ENCODE measurements at regions of chr13 and their contacts with region 1.

Region 1: DNA sequence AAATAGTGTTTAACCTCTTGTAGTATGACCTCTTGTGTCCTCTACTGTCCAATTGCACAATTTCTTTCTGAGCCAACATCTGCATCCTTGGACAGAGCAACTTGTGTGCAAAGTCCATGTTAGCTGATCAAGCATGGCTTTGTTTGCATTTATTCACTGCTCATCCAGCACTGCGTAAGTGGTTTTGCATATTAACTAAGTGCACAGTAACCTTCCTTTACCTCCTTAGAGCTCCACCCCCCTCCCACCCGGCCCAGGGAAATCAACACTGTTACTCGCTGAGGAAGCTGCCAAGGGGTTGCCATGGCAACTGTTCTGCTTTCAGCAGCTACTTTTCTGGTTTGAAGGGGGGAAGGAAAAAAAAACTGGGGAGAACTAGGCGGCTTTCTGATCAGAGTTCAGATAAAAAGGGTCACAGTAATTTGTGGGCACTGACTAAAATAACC is 153.5 kb upstream of the KLF12 start:
- DNase-seq: peak; percentile 87
- ATAC-seq: peak; percentile 73
- H3K4me3 Mint-ChIP-seq: peak overlapping the region; percentile 60
- H3K27ac Mint-ChIP-seq: peak overlapping the region; percentile 78
- H3K4me1 Mint-ChIP-seq: peaks cover 43% of the 10 kb centered on the region
- H3K27me3 Mint-ChIP-seq: no peaks in the 10 kb centered on the region

Region 2: DNA sequence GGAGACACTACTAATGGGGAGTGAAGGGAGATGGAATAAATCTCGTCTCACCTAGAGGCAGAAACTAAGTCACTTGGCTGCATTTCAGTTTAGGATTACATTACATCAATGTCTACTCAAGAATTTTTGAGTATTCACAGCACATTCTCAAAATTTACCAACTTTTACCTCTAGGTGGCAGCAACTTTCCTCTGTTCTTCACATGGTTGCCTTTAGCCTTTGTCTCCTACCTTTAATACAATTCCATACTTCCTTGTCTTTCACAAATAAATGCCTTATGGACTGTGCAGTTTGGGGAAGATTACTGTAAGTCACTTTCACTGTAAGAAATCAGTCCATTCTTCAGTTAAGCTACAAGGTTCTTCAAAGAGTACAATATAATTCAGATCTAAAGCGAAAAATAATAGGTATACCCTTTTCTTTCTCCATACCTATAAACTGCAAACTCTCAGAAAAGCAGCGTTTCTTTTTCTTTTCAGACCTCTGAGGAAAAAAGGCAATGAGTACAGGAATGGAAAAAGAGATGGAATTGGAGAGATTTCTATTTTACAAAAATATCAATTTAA is 532.9 kb before region 1 on chr13:
- CTCF ChIA-PET with region 1: interaction called, 11 read pairs
- POLR2A ChIA-PET with region 1: no interaction called
- DNase-seq: peak; percentile 47
- ATAC-seq: peak; percentile 63
- H3K4me3 Mint-ChIP-seq: no peak overlapping the region
- H3K27ac Mint-ChIP-seq: peak overlapping the region; percentile 58
- H3K4me1 Mint-ChIP-seq: peaks cover 14% of the 10 kb centered on the region
- H3K27me3 Mint-ChIP-seq: no peaks in the 10 kb centered on the region

Region 3: DNA sequence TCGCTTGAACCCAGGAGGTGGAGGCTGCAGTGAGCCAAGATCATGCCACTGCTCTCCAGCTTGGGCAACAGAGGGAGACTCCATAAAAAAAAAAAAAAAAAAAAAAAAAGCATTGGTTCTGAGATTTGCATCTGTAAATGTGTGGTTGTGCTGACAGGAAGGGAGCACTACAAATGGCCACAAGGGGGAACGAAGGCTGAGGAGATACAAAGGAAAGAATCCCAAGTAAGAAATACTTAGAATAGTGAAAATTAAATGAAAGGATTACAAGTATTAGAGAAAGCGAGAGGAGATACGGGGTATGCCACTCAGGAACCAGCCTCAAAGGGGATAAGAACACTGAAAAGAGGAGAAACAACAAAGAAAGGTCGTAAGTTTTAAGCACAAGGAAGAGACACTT is 438.5 kb before region 1 on chr13:
- CTCF ChIA-PET with region 1: interaction called, 21 read pairs
- POLR2A ChIA-PET with region 1: no interaction called
- DNase-seq: peak; percentile 40
- ATAC-seq: no peak
- H3K4me3 Mint-ChIP-seq: no peak overlapping the region
- H3K27ac Mint-ChIP-seq: no peak overlapping the region
- H3K4me1 Mint-ChIP-seq: peaks cover 5% of the 10 kb centered on the region
- H3K27me3 Mint-ChIP-seq: no peaks in the 10 kb centered on the region

Region 4: DNA sequence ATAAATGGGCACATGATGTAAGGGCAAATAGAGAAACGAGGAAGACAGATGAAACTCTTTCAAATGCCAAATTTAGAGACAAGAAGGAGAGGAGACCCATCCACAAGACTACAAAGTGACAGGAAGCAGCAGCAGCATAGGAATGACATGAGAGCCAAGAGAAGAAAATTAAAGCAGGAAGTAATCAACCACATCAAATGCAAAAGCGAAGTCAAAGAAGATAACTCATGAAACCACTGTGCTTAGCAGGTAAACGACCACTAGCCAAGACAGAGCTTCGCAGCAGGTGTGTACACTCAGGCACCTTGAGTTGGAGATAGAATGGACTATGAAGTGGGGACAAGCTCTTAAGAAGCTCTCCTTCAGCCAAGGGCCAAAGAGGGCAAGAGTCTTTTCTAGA is 217.7 kb before region 1 on chr13:
- CTCF ChIA-PET with region 1: interaction called, 14 read pairs
- POLR2A ChIA-PET with region 1: interaction called, 4 read pairs
- DNase-seq: peak; percentile 50
- ATAC-seq: peak; percentile 90
- H3K4me3 Mint-ChIP-seq: peak overlapping the region; percentile 64
- H3K27ac Mint-ChIP-seq: peak overlapping the region; percentile 80
- H3K4me1 Mint-ChIP-seq: peaks cover 59% of the 10 kb centered on the region
- H3K27me3 Mint-ChIP-seq: no peaks in the 10 kb centered on the region

Region 5: DNA sequence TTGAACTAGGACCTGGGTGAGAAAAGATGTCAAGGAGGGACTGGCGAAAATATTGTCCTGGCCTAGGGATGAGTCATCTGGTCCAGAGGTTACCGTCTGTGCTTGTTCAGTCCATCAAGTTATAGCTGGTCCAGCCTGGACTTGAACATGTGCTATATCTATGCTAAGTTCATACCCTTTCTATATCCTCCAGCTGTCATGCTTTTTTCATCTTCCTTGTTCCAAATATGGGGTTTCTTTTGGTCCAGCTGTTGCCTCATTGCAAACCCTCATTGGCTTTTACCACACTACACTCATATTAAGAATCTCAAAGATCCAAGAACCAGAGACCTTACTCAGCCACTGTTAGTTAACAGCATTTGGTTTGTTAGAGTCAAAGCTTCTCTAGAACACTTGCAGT is 134.4 kb before region 1 on chr13:
- CTCF ChIA-PET with region 1: interaction called, 20 read pairs
- POLR2A ChIA-PET with region 1: no interaction called
- DNase-seq: no peak
- ATAC-seq: no peak
- H3K4me3 Mint-ChIP-seq: no peak overlapping the region
- H3K27ac Mint-ChIP-seq: no peak overlapping the region
- H3K4me1 Mint-ChIP-seq: no peaks in the 10 kb centered on the region
- H3K27me3 Mint-ChIP-seq: peaks cover 2% of the 10 kb centered on the region

Region 6: GRCh38 chr13:74230984-74231501 is 56.7 kb before region 1 on chr13:
- CTCF ChIA-PET with region 1: interaction called, 10 read pairs
- POLR2A ChIA-PET with region 1: interaction called, 4 read pairs
- DNase-seq: no peak
- ATAC-seq: peak; percentile 79
- H3K4me3 Mint-ChIP-seq: peak overlapping the region; percentile 62
- H3K27ac Mint-ChIP-seq: peak overlapping the region; percentile 88
- H3K4me1 Mint-ChIP-seq: peaks cover 31% of the 10 kb centered on the region
- H3K27me3 Mint-ChIP-seq: no peaks in the 10 kb centered on the region

Region 7: GRCh38 chr13:75219479-75220237 is 931.9 kb after region 1 on chr13:
- CTCF ChIA-PET with region 1: interaction called, 16 read pairs
- POLR2A ChIA-PET with region 1: no interaction called
- DNase-seq: peak; percentile 86
- ATAC-seq: peak; percentile 100
- H3K4me3 Mint-ChIP-seq: peak overlapping the region; percentile 54
- H3K27ac Mint-ChIP-seq: no peak overlapping the region
- H3K4me1 Mint-ChIP-seq: peaks cover 7% of the 10 kb centered on the region
- H3K27me3 Mint-ChIP-seq: peaks cover 38% of the 10 kb centered on the region

Measured in activated CD8-positive, alpha-beta T cell treated with anti-CD3 and anti-CD28 coated beads, Interleukin-2, amount 10 ng/mL, durations not matched to agents 7 days and 5 days (primary cell).